ENCODE measurements at regions of chr3 and their contacts with region 1.

Region 1: DNA sequence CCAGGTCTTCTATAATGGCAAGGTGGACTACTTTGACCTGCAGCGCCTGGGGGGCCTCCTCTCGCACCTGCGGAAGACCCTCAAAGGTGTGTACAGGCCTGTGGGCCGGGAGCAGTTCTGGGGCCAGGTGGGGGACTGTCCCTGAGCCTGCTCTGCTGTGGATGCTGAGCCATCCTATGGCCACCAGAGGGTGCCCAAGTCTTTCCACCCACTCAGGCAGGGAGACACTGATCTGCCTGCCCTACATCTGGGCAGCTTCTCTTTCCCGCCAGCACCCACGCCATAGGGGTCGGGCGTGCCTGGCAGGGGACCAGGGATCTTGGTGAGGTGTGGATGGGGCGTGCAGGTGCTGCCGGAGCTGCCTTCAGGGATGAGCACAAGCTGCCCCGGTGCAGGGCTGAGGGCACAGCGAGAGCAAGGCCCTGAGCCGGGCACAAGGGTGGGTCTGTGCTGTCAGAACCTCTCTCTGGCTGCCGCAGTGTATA is 14.1 kb downstream of the RNF123 start:
- DNase-seq: peak; percentile 27
- H3K4me3 ChIP-seq: no peak overlapping the region
- H3K27ac ChIP-seq: no peak overlapping the region
- H3K27me3 ChIP-seq: no peaks in the 10 kb centered on the region
- CTCF ChIP-seq: peak; percentile 85

Region 2: GRCh38 chr3:49689046-49689907 is 14.2 kb before region 1 on chr3 and contains the starts of genes MST1 and RNF123:
- CTCF ChIA-PET with region 1: interaction called, 16 read pairs
- POLR2A ChIA-PET with region 1: no interaction called
- DNase-seq: peak; percentile 78
- H3K4me3 ChIP-seq: peak within 1 kb of the TSS; percentile 95
- H3K27ac ChIP-seq: peak within 1 kb of the TSS; percentile 52
- H3K27me3 ChIP-seq: no peaks in the 10 kb centered on the region
- CTCF ChIP-seq: peak; percentile 48
- polyA plus RNA-seq, gene MST1: 6.4 and 6.5 TPM in 2 replicates
- polyA plus RNA-seq, gene RNF123: 22.9 and 33.3 TPM in 2 replicates

Measured in AG04450 (cell line).